ENCODE measurements at regions of chr3 and their contacts with region 1.

Region 1: DNA sequence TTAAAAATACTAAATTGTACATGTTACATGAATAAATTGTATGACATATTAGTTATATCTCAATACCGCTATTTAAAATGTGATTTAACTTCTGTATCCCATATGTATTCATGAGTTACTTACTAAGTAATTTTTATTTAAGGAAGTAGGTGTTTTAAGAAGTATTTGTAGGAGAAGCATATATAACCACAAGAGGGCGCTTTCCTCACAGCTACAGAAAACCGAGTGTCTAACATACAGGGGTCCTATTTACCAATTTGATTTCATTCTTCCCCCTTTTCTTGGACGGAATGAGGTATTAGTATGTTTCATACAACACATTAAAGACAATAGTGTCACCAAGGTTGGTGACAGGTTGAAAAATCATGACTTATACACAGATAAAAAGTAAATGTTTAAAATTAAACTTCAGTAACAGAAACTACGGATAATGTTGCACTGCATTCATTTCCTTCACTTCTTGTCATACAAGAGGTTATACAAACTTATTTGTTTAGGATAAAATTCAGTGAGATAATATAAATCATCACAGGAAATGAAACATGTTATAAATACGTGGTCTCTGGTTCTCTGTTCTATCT is 253.6 kb downstream of the MAGI1 start:
- DNase-seq: peak; percentile 54
- CTCF ChIP-seq: peak; percentile 51

Region 2: GRCh38 chr3:65902304-65902793 is 117.2 kb after region 1 on chr3:
- in situ Hi-C with region 1: loop called (anchors 10 kb)
- DNase-seq: no peak
- CTCF ChIP-seq: no peak

Region 3: DNA sequence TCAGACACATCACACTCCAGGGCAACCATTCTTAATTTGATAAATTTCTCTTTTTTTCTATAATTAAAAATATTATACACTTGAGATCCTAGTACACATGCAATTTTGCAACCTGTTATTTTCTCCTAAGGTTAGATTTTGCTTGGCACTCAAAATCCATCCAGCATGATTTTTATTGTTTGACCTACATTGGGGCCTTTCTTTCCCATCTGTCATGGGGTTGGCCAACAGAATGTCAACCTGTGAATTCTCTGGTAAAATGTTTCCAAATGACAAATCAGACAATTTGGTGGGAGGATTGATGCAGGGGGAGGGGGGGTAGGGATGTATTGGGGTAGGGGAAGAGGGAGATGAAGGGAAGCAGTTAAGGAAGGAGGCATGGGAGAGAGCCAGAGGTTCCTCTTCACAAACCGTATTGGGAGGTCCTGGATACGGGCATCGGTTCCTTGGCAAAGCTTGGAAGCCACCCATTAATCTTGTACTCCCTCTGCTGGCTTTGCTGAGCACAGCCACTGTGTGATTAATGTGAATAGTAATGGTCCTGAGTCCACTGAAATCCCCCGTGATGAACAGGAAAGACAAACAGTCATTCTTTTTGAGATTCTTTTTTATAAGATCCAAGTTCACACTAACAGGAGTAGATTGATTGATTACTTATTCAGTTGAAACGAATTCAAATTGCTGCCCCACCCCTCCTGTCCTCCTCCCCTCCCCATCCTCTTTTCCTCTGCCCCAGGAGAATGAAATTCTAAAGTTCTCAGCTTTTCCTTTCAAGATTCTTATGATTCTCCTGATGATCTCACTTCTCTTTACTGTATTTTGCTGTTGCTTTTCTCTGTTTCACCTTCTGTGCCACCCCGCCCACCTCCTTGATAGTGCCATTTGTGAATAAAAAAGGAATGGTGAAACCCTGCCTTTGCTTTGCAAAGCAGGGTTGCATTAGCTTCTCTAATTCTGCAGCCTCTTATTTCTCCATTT is 353.5 kb after region 1 on chr3:
- in situ Hi-C with region 1: loop called (anchors 25 kb)
- DNase-seq: peak; percentile 49
- CTCF ChIP-seq: no peak